ENCODE measurements at regions of chr5 and their contacts with region 1.

Region 1: GRCh38 chr5:178153573-178154343 is at the start of gene NHP2:
- H3K4me3 Mint-ChIP-seq: peak within 1 kb of the TSS; percentile 92
- H3K27ac Mint-ChIP-seq: peak within 1 kb of the TSS; percentile 90
- H3K4me1 Mint-ChIP-seq: peaks cover 26% of the 10 kb centered on the region
- H3K27me3 Mint-ChIP-seq: no peaks in the 10 kb centered on the region

Region 2: GRCh38 chr5:178130604-178131485 is 22.9 kb before region 1 on chr5 and contains the start of gene RMND5B:
- intact Hi-C with region 1: loop called (anchors 1 kb)
- H3K4me3 Mint-ChIP-seq: peak within 1 kb of the TSS; percentile 87
- H3K27ac Mint-ChIP-seq: peak within 1 kb of the TSS; percentile 66
- H3K4me1 Mint-ChIP-seq: peaks cover 14% of the 10 kb centered on the region
- H3K27me3 Mint-ChIP-seq: peaks cover 8% of the 10 kb centered on the region

Region 3: DNA sequence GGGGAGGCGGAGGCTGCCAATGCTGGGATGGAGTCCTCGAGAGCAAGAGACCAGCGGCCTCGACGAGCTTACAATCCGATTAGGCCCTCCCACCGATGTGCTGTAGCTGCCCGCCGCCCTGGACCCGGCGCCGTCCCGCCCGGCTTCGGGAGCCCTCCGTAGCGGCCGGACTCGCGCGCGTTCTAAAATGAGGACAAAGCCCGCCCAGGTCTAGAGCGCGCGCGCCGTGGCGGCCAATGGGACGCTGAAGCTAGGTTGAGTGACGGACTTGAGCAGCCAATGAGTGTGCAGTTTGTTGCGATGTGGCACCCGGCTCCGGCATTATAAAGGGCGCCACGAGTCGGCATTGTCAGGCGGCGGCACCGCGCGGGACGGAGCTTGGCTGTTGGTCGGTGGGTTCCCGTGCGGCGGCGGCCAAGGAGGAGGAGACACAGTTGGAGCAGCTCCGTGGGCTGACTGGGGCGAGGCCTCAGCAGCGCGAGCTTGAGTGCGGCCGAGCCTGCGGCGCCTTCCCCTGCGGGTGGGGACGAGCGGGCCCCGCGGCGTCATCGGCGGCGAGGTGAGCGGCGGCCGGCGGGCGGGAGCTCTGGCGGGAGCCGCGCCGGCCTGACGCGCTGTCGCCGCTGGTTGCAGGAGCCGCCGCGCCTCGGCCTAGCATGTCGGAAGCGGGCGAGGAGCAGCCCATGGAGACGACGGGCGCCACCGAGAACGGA is 50.6 kb after region 1 on chr5 and contains the start of gene HNRNPAB:
- intact Hi-C with region 1: loop called (anchors 2 kb)
- H3K4me3 Mint-ChIP-seq: peak within 1 kb of the TSS; percentile 96
- H3K27ac Mint-ChIP-seq: peak within 1 kb of the TSS; percentile 97
- H3K4me1 Mint-ChIP-seq: peaks cover 44% of the 10 kb centered on the region
- H3K27me3 Mint-ChIP-seq: no peaks in the 10 kb centered on the region

Region 4: GRCh38 chr5:178356431-178356872 is 202.7 kb after region 1 on chr5:
- intact Hi-C with region 1: no loop called
- H3K4me3 Mint-ChIP-seq: peak overlapping the region; percentile 45
- H3K27ac Mint-ChIP-seq: peak overlapping the region; percentile 23
- H3K4me1 Mint-ChIP-seq: peaks cover 39% of the 10 kb centered on the region
- H3K27me3 Mint-ChIP-seq: peaks cover 19% of the 10 kb centered on the region

Measured in dendritic cell treated with granulocyte-macrophage colony-stimulating factor and Interleukin-4, amounts not matched to agents 40 ng/mL and 50 ng/mL, for 4 days (primary cell).